Endothelial cell of umbilical vein (primary cell): ENCODE measurements at regions of chr11 and their contacts with region 1.

Region 1: GRCh38 chr11:104734998-104735397 is 163.3 kb downstream of the CASP12 start:
- DNase-seq: peak; percentile 43
- H3K4me3 ChIP-seq: no peak overlapping the region
- H3K27ac ChIP-seq: no peak overlapping the region
- H3K4me1 ChIP-seq: peaks cover 16% of the 10 kb centered on the region
- H3K27me3 ChIP-seq: no peaks in the 10 kb centered on the region
- CTCF ChIP-seq: no peak
- POLR2A ChIP-seq: no peak

Region 2: DNA sequence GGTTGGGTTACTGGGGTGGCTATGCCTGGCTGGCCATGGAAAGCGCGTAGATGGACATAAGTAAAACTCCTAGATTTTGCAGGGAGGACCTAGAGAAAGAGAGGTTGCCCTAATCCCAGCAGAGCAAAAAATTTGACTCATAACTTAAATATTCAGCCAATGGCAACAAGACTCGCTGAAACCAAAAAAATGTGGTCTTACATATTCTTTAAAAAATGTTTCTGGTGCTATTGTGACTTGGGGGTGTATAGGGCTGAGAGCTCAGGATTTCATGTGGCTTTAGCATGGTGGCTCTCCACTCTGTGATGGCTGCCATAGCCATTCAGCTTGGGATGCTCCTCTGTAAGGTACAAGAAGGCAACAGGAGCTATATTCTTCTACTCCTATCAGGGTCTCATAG is 543.9 kb before region 1 on chr11:
- CTCF ChIA-PET with region 1: no interaction called
- POLR2A ChIA-PET with region 1: no interaction called
- dilution Hi-C with region 1: no loop called
- intact Hi-C with region 1: no loop called
- DNase-seq: no peak
- H3K4me3 ChIP-seq: no peak overlapping the region
- H3K27ac ChIP-seq: no peak overlapping the region
- H3K4me1 ChIP-seq: no peaks in the 10 kb centered on the region
- H3K27me3 ChIP-seq: no peaks in the 10 kb centered on the region
- CTCF ChIP-seq: no peak
- POLR2A ChIP-seq: no peak

Region 3: DNA sequence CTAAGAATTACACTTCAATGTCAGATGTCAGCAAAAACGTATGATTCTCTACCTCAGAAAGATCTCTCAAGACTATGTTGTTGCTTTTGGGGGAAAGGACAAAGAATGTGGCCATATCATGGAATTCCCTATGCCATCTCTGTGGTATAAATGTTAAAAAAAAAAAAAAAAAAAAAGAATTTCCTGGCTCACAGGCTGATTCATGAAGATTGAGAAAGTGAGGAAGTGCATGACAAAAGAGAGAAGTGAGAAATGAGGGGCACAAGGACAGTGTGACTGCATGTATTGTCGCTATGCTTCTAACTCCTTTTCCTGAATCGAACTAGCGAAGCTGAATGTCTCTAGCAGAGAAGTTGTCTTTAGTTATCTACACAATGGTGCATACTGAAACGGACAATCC is 485.1 kb after region 1 on chr11:
- CTCF ChIA-PET with region 1: no interaction called
- POLR2A ChIA-PET with region 1: interaction called, 11 read pairs
- dilution Hi-C with region 1: no loop called
- intact Hi-C with region 1: no loop called
- DNase-seq: peak; percentile 8
- H3K4me3 ChIP-seq: no peak overlapping the region
- H3K27ac ChIP-seq: no peak overlapping the region
- H3K4me1 ChIP-seq: no peaks in the 10 kb centered on the region
- H3K27me3 ChIP-seq: no peaks in the 10 kb centered on the region
- CTCF ChIP-seq: no peak
- POLR2A ChIP-seq: no peak